Activated CD8-positive, alpha-beta T cell treated with anti-CD3 and anti-CD28 coated beads for 36 hours (primary cell): ENCODE measurements at regions of chr5 and their contacts with region 1.

Region 1: GRCh38 chr5:151213800-151214613 is 9.9 kb downstream of the CCDC69 start:
- DNase-seq: peak; percentile 94
- ATAC-seq: peak; percentile 86
- H3K4me3 Mint-ChIP-seq: peak overlapping the region; percentile 88
- H3K27ac Mint-ChIP-seq: peak overlapping the region; percentile 99
- H3K4me1 Mint-ChIP-seq: peaks cover 75% of the 10 kb centered on the region
- H3K27me3 Mint-ChIP-seq: no peaks in the 10 kb centered on the region
- CTCF ChIP-seq: no peak

Region 2: DNA sequence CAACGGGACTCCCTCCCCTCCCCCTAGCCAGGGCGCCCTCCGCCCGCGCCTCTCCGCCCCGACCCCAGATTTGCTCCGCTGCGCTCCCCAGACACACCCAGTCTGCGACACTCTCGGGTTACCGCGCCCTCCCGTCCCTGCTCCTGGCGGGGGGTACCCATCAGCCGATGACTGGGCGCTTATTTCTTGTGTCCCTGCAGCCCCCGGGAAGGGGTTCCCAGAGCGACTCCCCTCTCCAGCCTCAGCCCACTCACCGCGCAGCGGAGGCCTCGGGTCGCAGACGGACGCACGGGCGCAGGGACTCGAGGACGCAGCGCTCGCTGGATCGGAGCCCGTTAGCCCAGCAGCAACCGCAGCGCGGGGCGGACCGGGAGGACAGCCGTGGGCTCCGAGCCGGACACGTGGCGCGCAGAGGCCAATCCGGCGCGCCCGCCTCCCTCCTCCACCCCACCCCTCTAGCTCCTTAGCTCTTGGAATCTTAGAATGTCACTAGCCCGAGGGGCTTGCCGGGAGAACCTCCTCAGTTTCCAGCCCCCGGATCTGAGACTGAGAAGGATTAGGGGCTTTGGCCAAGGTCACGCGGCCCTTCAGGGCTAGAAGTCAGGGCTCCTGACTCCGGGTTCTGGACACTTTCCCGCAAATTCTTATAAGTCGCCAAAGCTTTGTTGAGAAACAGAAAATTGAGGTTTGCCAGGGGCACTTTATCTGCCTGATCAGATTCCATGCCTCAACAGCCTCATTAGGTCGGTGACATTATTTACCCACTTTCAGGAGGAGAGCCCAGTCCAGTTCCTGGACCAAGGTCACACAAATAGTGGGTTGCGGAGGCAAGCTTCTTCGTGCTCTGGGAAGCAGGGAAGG is 56.4 kb before region 1 on chr5 and contains the start of gene ANXA6:
- CTCF ChIA-PET with region 1: interaction called, 3 read pairs
- POLR2A ChIA-PET with region 1: interaction called, 4 read pairs
- intact Hi-C with region 1: loop called (anchors 2 kb)
- DNase-seq: peak; percentile 76
- ATAC-seq: peak; percentile 53
- H3K4me3 Mint-ChIP-seq: peak within 1 kb of the TSS; percentile 95
- H3K27ac Mint-ChIP-seq: peak within 1 kb of the TSS; percentile 89
- H3K4me1 Mint-ChIP-seq: peaks cover 40% of the 10 kb centered on the region
- H3K27me3 Mint-ChIP-seq: no peaks in the 10 kb centered on the region
- CTCF ChIP-seq: no peak
- total RNA-seq, gene ANXA6: 328 to 336 TPM

Region 3: GRCh38 chr5:151202381-151203139 is 11.4 kb before region 1 on chr5:
- CTCF ChIA-PET with region 1: interaction called, 12 read pairs
- POLR2A ChIA-PET with region 1: interaction called, 18 read pairs
- intact Hi-C with region 1: no loop called
- DNase-seq: peak; percentile 70
- ATAC-seq: peak; percentile 96
- H3K4me3 Mint-ChIP-seq: no peak overlapping the region
- H3K27ac Mint-ChIP-seq: peak overlapping the region; percentile 91
- H3K4me1 Mint-ChIP-seq: peaks cover 46% of the 10 kb centered on the region
- H3K27me3 Mint-ChIP-seq: no peaks in the 10 kb centered on the region
- CTCF ChIP-seq: no peak

Region 4: GRCh38 chr5:151252762-151253604 is 39.0 kb after region 1 on chr5 and contains the start of gene GM2A:
- CTCF ChIA-PET with region 1: no interaction called
- POLR2A ChIA-PET with region 1: interaction called, 5 read pairs
- intact Hi-C with region 1: loop called (anchors 5 kb)
- DNase-seq: peak; percentile 100
- ATAC-seq: peak; percentile 92
- H3K4me3 Mint-ChIP-seq: peak within 1 kb of the TSS; percentile 90
- H3K27ac Mint-ChIP-seq: peak within 1 kb of the TSS; percentile 95
- H3K4me1 Mint-ChIP-seq: peaks cover 39% of the 10 kb centered on the region
- H3K27me3 Mint-ChIP-seq: no peaks in the 10 kb centered on the region
- CTCF ChIP-seq: no peak
- total RNA-seq, gene GM2A: 13.3 to 13.7 TPM